Activated CD4-positive, alpha-beta T cell treated with anti-CD3 and anti-CD28 coated beads for 36 hours (primary cell): ENCODE measurements at regions of chr5 and their contacts with region 1.

Region 1: GRCh38 chr5:94618493-94619328 is at the starts of genes KIAA0825 and SLF1:
- DNase-seq: peak; percentile 94
- ATAC-seq: peak; percentile 90
- H3K4me3 Mint-ChIP-seq: peak within 1 kb of the TSS; percentile 84
- H3K27ac Mint-ChIP-seq: peak within 1 kb of the TSS; percentile 95
- H3K4me1 Mint-ChIP-seq: peaks cover 36% of the 10 kb centered on the region
- H3K27me3 Mint-ChIP-seq: no peaks in the 10 kb centered on the region
- total RNA-seq, gene KIAA0825: 1.1 to 1.3 TPM
- total RNA-seq, gene SLF1: 13.3 to 13.6 TPM

Region 2: GRCh38 chr5:93620487-93621326 is 998.0 kb before region 1 on chr5:
- CTCF ChIA-PET with region 1: no interaction called
- POLR2A ChIA-PET with region 1: no interaction called
- intact Hi-C with region 1: loop called in 1 of 2 experiments (anchors 10 kb)
- DNase-seq: peak; percentile 77
- ATAC-seq: peak; percentile 82
- H3K4me3 Mint-ChIP-seq: peak overlapping the region; percentile 78
- H3K27ac Mint-ChIP-seq: peak overlapping the region; percentile 62
- H3K4me1 Mint-ChIP-seq: peaks cover 28% of the 10 kb centered on the region
- H3K27me3 Mint-ChIP-seq: peaks cover 18% of the 10 kb centered on the region

Region 3: DNA sequence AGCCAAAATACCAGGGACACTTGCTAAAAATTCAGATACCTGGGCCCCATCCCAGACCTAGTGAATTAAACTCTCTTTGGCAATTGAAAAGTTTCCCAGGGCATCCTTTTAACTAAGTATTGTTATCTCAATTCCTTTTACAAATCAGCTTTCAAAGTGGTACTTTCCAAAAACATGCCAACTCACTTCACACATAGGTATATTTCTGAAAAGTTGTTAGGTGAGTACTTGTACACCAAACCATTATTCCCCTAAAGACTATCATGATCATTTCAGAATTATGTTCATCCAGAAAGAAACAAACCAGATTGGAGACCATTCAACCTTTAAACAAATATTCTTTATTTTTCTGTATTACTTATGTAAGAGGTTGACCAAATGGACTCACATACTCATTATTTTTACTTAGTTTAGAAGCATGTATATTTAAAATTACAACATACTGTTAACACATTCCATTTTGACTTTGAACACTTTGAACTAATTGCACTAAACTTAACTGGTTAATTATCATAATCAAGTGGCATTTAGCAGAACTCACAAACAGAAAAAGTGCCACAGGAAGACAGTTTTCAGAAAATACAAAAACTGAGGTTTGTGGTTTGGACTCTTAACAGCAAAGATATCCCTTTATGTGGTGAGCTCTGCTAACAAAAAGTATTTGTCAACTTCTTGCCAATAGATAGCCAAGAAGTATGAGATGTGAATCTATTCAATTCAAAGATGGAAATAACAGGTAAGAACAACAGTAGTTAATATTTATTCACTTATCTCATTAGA is 41.1 kb before region 1 on chr5:
- CTCF ChIA-PET with region 1: no interaction called
- POLR2A ChIA-PET with region 1: no interaction called
- intact Hi-C with region 1: loop called in 1 of 2 experiments (anchors 5 kb)
- DNase-seq: no peak
- ATAC-seq: peak; percentile 59
- H3K4me3 Mint-ChIP-seq: no peak overlapping the region
- H3K27ac Mint-ChIP-seq: no peak overlapping the region
- H3K4me1 Mint-ChIP-seq: peaks cover 29% of the 10 kb centered on the region
- H3K27me3 Mint-ChIP-seq: no peaks in the 10 kb centered on the region

Region 4: DNA sequence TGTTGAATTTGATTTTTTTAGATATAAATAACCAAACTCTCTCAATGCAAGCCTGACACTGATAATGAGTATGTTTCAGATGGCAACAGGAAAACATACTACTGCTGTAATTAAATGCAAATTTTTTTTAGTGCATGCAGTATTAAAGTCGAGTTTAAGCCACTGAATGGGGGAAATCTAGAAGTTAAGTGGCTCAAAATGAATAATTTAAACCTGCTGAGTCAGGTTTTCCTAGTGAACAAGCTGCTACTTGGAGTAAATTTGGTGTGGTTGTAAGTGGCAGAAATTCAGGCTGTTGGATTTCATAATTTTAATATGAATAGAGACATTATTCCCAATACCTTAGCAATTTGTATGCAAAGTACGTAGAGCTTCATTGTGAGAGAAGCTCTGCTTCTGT is 121.6 kb after region 1 on chr5:
- CTCF ChIA-PET with region 1: interaction called, 5 read pairs
- POLR2A ChIA-PET with region 1: no interaction called
- intact Hi-C with region 1: loop called (anchors 2 kb)
- DNase-seq: no peak
- ATAC-seq: no peak
- H3K4me3 Mint-ChIP-seq: no peak overlapping the region
- H3K27ac Mint-ChIP-seq: no peak overlapping the region
- H3K4me1 Mint-ChIP-seq: peaks cover under 1% of the 10 kb centered on the region
- H3K27me3 Mint-ChIP-seq: no peaks in the 10 kb centered on the region

Region 5: GRCh38 chr5:94849821-94850736 is 231.4 kb after region 1 on chr5:
- CTCF ChIA-PET with region 1: interaction called, 6 read pairs
- POLR2A ChIA-PET with region 1: no interaction called
- intact Hi-C with region 1: loop called (anchors 1 to 5 kb)
- DNase-seq: peak; percentile 43
- ATAC-seq: peak; percentile 87
- H3K4me3 Mint-ChIP-seq: no peak overlapping the region
- H3K27ac Mint-ChIP-seq: no peak overlapping the region
- H3K4me1 Mint-ChIP-seq: peaks cover 8% of the 10 kb centered on the region
- H3K27me3 Mint-ChIP-seq: no peaks in the 10 kb centered on the region